Activated naive CD4-positive, alpha-beta T cell treated with anti-CD3 and anti-CD28 coated beads for 36 hours (primary cell): ENCODE measurements at regions of chr4 and their contacts with region 1.

Region 1: DNA sequence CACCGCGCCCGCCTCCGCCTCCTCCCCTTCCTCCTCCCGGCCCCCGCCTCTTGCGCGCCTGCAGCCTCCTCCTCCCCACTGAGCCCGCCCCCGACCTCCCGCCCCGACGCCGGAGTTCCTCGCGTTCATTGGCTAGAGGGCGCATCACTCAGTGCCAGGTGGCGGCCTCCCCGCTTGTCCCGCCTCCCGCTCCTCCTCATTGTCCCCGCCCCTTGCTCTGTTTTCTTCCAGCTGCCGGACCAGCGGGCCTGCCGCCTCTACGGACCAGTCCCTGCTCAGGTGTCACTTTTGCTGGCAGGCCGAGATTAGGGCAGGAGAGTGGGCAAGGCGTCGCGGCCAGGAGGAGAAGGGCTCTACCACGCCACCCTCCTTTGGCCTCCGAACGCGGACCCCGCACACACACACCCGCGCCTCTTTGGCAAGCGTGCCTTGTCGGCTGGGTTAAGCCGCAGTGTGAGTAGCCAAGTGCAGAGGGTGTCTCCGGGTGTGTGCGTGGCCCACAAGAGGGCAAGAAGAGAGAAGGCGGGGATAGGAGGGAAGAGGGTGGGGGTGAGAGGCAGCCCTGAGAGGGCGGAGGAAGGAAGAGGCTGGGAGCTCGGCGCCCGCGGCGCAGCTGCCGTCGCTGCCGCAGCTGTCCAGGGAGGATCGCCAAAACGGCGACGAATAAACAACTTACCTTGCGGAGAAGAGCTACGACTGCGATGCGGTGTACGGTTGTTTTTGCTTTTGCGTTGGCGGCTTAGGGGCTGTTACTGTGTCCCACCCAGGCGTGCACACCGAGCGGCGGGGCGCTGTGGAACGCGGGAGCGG is 436 bp upstream of the PPP3CA start:
- DNase-seq: peak; percentile 99
- H3K4me3 Mint-ChIP-seq: peak overlapping the region; percentile 95
- H3K27ac Mint-ChIP-seq: peak overlapping the region; percentile 82
- H3K4me1 Mint-ChIP-seq: peaks cover 22% of the 10 kb centered on the region
- H3K27me3 Mint-ChIP-seq: peaks cover 31% of the 10 kb centered on the region

Region 2: DNA sequence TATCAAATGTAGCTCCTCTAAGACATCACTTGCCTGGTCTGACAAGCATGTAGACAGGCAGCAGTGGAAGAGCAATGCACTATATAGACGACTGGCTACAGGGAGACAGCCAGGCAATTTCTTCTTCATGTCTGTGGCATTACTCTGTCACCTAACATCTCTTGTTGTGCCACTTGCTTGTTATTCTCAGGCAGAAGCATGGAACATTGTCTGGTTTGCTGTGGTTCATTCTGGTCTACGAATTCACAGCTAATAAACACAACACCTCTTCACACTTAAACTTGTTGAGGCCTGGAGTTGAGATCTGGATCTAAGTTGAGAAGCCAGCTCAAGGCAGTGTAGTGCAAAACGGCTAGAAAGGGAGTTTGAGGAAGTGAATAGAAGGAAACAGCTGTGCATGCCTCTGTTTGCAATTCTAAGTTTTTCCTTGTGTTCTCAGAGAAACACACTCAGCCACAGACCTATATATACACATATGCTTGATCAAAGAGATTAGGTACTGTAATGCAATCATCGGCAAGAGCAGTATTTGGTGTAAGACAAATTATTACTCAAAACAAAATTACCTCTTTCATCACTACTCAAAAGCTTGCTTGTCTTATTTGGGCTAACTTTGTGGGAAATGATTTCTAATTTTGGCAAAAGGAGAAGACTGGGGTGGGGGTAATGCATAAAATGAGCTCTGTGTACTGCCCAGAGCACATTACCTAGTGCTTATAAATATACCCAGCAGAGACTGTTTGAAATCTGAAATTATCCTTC is 244.2 kb before region 1 on chr4:
- CTCF ChIA-PET with region 1: no interaction called
- intact Hi-C with region 1: loop called (anchors 5 kb)
- DNase-seq: no peak
- H3K4me3 Mint-ChIP-seq: no peak overlapping the region
- H3K27ac Mint-ChIP-seq: no peak overlapping the region
- H3K4me1 Mint-ChIP-seq: peaks cover 21% of the 10 kb centered on the region
- H3K27me3 Mint-ChIP-seq: no peaks in the 10 kb centered on the region

Region 3: GRCh38 chr4:101205916-101206315 is 141.8 kb before region 1 on chr4:
- CTCF ChIA-PET with region 1: no interaction called
- intact Hi-C with region 1: loop called (anchors 1 kb)
- DNase-seq: peak; percentile 60
- H3K4me3 Mint-ChIP-seq: no peak overlapping the region
- H3K27ac Mint-ChIP-seq: no peak overlapping the region
- H3K4me1 Mint-ChIP-seq: peaks cover 24% of the 10 kb centered on the region
- H3K27me3 Mint-ChIP-seq: no peaks in the 10 kb centered on the region

Region 4: DNA sequence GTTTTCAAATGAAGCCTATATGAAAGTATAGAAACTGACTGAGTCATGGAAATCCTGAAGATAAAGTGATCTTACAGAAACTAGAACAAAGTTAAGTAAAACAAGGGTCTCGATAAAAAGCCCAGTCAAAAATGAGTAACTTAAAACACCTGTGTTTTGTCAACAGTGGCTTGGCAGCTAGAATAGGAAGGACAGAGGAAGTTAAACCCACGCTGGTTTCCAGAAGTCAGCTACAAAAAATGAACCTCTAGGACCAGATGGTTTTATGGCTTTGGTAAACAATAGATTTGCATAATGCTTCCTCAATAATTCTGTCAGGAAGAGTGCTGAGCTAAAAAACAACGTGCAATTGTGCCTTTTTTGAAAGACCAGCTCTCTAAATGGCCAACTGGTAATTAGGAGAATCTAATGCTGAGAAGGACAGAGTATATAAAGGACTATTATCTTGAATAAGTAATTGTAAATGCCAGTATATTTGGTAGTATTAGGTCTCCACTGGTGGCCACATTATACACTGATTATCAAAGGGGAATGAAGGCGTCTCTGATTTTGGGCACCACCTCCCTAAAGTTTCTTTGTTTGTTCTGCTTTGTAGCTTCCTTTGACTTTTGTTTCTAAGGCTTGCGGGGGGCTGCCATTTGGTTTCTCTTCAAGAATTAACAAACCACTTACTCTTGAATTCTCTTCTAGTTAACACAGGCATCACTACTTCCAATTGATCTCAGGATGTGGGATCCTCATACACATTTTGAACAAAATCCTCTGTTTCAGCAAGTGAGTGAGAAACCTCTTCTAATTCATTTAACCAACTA is 71.8 kb after region 1 on chr4:
- CTCF ChIA-PET with region 1: interaction called, 3 read pairs
- intact Hi-C with region 1: loop called (anchors 2 kb)
- DNase-seq: no peak
- H3K4me3 Mint-ChIP-seq: no peak overlapping the region
- H3K27ac Mint-ChIP-seq: no peak overlapping the region
- H3K4me1 Mint-ChIP-seq: peaks cover 36% of the 10 kb centered on the region
- H3K27me3 Mint-ChIP-seq: peaks cover 43% of the 10 kb centered on the region

Region 5: DNA sequence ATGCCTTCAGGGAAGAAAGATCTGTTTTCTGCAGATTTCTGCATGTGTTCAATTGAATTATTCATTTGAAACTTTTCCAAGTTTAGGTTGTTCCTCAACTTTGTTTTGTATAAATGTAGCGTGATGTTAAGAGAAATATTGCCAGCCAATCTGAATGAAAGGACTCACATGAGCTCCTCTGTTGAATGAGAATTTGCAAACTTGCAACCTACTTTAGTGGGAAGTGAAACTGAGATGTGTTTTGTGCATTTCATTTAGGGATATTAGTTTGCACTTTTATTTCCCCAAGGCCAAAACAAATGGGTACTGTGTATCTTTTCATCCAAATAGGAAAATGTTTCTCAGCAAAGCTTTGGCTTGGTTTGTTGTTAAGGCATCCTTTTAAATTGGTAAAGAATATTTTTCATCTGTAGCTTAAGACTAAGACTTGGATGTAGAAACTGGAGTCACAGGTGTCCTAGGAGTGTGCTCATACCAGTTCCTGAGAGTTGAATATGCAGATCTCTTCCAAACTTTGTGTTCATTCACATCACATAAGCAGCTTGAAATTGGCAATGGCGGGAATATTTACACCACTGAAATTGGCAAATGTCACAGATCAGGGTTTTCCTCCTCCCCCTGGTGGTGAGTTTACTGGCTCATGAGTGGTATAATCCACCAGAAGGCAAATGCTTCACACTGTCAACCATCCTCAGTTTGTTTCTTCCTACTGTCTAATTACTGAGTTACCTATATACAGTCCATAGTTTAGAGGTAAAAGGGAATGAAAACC is 249.2 kb after region 1 on chr4:
- CTCF ChIA-PET with region 1: no interaction called
- intact Hi-C with region 1: loop called (anchors 5 kb)
- DNase-seq: peak; percentile 33
- H3K4me3 Mint-ChIP-seq: no peak overlapping the region
- H3K27ac Mint-ChIP-seq: no peak overlapping the region
- H3K4me1 Mint-ChIP-seq: no peaks in the 10 kb centered on the region
- H3K27me3 Mint-ChIP-seq: peaks cover 1% of the 10 kb centered on the region

Region 6: DNA sequence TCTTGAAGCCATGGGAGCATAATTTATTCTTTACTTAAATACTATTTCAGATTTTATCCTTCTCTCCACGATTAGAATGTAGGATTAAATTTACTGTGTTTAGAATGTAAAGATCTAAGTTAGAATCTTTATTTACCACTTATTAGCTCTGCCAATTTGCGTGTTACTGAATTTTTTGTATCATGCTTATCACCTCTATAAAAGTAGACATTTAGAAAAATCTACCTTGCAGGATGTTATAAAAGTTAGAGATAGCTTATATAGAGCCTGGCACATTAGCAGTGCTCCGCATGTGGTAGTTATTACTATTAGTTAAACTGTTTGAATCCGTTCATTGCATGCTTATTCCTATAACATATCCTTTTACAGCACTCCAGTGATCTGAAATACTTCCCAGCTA is 540.7 kb after region 1 on chr4:
- CTCF ChIA-PET with region 1: no interaction called
- intact Hi-C with region 1: no loop called
- DNase-seq: no peak
- H3K4me3 Mint-ChIP-seq: no peak overlapping the region
- H3K27ac Mint-ChIP-seq: no peak overlapping the region
- H3K4me1 Mint-ChIP-seq: no peaks in the 10 kb centered on the region
- H3K27me3 Mint-ChIP-seq: no peaks in the 10 kb centered on the region

Region 7: GRCh38 chr4:102525097-102525496 is 1177.3 kb after region 1 on chr4:
- CTCF ChIA-PET with region 1: no interaction called
- intact Hi-C with region 1: loop called (anchors 10 kb)
- DNase-seq: peak; percentile 22
- H3K4me3 Mint-ChIP-seq: peak overlapping the region; percentile 47
- H3K27ac Mint-ChIP-seq: peak overlapping the region; percentile 83
- H3K4me1 Mint-ChIP-seq: peaks cover 88% of the 10 kb centered on the region
- H3K27me3 Mint-ChIP-seq: no peaks in the 10 kb centered on the region